MCF 10A (cell line): ENCODE measurements at regions of chr9 and their contacts with region 1.

Region 1: DNA sequence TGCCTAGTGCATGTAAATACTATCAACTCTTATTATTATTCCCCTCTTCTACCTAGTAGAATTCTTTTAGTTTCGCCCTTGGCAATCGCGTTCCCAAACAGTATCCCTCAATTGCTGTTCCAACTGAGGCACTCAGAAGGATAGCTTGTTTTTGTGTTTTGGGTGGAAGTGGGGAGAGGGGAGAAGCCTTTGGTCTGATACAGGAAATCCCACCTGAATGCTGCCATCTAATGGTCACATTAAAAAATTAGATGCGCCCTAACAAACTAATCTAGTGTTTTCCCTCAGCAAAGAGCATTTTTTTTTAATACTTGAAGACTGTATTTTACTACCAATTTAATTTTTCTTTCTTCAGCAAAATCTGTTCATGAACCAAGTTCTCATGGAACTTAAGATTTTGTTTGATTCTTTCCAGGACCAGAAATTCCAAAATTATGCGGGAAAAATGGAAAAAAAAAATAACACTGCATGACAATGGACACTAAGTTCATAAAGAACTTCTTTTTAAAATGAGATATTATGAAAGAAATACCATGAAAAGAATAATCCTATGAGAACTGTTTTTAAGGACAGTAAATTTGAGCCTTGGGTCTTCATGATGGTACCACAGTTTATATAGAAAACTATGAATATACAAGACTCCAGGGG is 22.2 kb upstream of the GLDC start:
- DNase-seq: peak; percentile 56
- H3K4me3 Mint-ChIP-seq: no peak overlapping the region
- H3K27ac Mint-ChIP-seq: no peak overlapping the region
- H3K4me1 Mint-ChIP-seq: no peaks in the 10 kb centered on the region
- H3K27me3 Mint-ChIP-seq: no peaks in the 10 kb centered on the region
- CTCF ChIP-seq: peak; percentile 51

Region 2: DNA sequence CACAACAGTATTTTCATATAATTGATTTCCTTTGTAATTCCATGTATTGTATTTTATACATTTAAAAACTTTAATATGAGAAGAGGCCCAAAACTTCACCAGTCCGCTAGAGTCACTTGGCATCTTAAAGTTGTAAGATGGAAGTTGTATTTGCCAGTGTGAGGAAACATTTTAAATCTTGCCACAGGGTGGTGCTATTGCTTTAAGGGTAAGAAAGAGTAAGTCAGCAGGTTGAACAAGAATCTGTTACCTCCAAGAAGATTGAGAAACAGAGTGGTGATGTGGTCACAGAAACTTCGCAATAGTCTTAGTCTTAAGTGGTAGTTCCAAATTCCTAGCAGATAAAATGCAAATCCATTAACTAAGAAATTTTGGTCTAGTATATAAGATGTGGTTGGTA is 612.5 kb before region 1 on chr9:
- CTCF ChIA-PET with region 1: no interaction called
- POLR2A ChIA-PET with region 1: no interaction called
- intact Hi-C with region 1: loop called (anchors 10 kb)
- DNase-seq: peak; percentile 93
- H3K4me3 Mint-ChIP-seq: no peak overlapping the region
- H3K27ac Mint-ChIP-seq: no peak overlapping the region
- H3K4me1 Mint-ChIP-seq: peaks cover 11% of the 10 kb centered on the region
- H3K27me3 Mint-ChIP-seq: no peaks in the 10 kb centered on the region
- CTCF ChIP-seq: peak; percentile 72

Region 3: DNA sequence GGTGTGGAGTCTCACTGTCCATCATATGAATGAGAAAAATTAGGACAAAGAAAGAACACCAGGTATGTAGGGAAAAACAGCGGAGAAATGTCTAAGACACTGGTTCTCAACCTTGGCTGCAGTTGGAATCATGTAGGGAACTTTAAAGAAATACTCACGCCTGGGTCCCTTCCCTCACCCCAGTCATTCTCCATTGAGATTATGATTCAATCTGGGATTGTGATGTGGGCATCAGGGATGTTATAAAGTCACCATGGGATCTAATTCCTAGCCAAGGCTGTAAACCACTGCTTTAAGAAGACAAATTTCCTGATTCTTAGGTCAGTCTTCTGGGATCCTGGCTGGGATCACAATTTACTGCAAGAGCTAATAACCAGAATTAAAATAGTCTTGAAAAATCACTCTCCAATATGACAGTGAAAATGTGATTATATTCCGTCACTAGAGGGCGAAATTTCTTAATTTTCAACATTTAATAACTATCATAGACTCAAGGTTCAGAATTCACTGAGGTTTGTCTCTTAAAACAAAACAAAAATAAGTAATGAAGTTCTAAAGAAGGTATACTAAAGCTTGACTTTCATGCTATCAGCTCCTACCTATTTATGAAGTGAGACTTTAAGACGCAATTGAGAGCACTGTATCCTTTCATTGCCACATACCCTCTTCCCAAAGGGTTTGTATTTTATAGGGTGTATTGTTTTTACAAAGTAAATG is 82.7 kb before region 1 on chr9:
- CTCF ChIA-PET with region 1: interaction called, 248 read pairs
- POLR2A ChIA-PET with region 1: interaction called, 3 read pairs
- intact Hi-C with region 1: loop called (anchors 1 kb)
- DNase-seq: peak; percentile 40
- H3K4me3 Mint-ChIP-seq: no peak overlapping the region
- H3K27ac Mint-ChIP-seq: no peak overlapping the region
- H3K4me1 Mint-ChIP-seq: no peaks in the 10 kb centered on the region
- H3K27me3 Mint-ChIP-seq: no peaks in the 10 kb centered on the region
- CTCF ChIP-seq: peak; percentile 38

Region 4: GRCh38 chr9:6645355-6646292 is 22.1 kb before region 1 on chr9 and contains the start of gene GLDC:
- CTCF ChIA-PET with region 1: interaction called, 13 read pairs
- POLR2A ChIA-PET with region 1: interaction called, 3 read pairs
- intact Hi-C with region 1: no loop called
- DNase-seq: peak; percentile 83
- H3K4me3 Mint-ChIP-seq: peak within 1 kb of the TSS; percentile 65
- H3K27ac Mint-ChIP-seq: no peak within 1 kb of the TSS
- H3K4me1 Mint-ChIP-seq: peaks cover under 1% of the 10 kb centered on the region
- H3K27me3 Mint-ChIP-seq: no peaks in the 10 kb centered on the region
- CTCF ChIP-seq: no peak
- total RNA-seq, gene GLDC: 2.9 and 3.3 TPM in 2 replicates

Region 5: DNA sequence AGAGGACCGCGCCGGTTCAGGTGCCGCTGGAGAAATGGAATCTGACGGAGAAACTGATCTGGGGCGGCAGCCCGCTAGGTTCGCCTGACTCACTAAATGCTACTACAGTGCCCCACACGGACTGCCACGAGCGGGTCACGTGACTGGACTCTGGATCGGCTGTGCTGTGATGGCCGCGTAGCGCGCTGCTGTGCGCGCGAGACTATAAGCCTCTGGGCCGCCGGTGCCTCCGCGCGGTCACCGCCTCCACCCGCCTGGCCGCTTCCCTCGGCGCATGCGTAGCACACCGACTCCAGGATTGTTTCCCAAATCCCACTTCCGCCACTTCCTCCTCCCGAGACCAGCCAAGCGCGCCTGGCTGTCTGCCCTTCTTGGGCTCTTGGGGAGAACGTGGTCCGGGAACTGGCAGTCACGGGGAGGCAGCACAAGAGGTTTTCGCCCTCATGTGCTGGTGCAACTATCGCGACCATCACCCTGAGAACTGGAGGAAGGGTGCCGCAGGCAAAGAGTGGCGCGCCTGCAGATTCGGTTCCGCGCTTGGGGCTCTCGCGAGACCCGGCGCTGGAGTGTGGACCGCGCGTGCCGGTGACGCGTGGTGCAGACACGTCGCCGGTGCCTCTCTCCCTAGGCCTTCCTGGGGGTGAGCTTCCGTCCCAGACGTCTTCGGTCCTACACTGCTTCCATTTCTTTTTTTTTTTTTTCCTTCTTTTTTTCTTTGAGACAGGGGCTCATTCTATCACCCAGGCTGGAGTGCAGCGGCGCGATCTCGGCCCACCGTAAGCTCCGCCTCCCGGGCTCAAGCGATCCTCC is 13.6 kb after region 1 on chr9:
- CTCF ChIA-PET with region 1: interaction called, 18 read pairs
- POLR2A ChIA-PET with region 1: interaction called, 5 read pairs
- intact Hi-C with region 1: no loop called
- DNase-seq: peak; percentile 97
- H3K4me3 Mint-ChIP-seq: peak overlapping the region; percentile 92
- H3K27ac Mint-ChIP-seq: peak overlapping the region; percentile 98
- H3K4me1 Mint-ChIP-seq: peaks cover 15% of the 10 kb centered on the region
- H3K27me3 Mint-ChIP-seq: no peaks in the 10 kb centered on the region
- CTCF ChIP-seq: no peak